ENCODE measurements at regions of chr12 and their contacts with region 1.

Region 1: DNA sequence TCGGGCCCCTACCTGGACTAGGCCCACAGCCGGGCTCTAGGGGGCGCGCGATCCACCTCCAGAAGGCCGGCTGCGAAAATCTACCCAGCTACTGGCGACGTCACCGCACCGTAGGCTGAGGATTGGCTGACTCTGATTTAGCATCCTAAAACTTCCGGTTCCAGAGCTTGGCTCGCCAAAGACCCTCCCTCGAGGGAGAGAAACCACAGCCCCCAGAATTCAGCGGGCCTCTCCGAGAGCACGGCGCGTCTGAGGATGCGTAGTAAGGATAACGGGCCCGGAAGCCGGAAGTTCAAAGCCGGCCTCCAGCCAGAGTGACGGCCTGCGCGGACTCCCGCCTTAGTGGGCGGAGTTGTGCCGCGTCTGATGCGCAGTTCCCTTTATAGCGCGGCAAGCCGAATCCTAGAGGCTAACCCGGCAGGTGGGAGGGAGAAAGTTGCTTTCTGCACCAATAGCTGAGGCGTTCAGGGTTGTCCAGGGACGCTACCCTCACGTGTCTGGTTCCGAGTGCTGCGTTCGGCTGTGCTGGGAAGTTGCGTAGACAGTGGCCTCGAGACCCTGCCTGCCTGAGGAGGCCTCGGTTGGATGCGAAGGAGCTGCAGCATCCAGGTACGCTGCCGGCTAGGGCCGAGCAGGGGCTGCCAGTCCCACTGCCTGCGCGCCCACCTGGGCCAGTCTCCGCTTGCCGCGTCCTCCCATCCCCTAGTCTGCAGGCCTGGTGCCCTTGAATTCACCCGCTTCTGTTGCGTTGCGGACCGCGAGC is at the start of gene COX14:
- DNase-seq: peak; percentile 99
- H3K4me3 Mint-ChIP-seq: peak within 1 kb of the TSS; percentile 89
- H3K27ac Mint-ChIP-seq: peak within 1 kb of the TSS; percentile 97
- H3K4me1 Mint-ChIP-seq: peaks cover 34% of the 10 kb centered on the region
- H3K27me3 Mint-ChIP-seq: no peaks in the 10 kb centered on the region
- total RNA-seq, gene COX14: 31.6 to 47.9 TPM

Region 2: GRCh38 chr12:50066433-50066832 is 45.4 kb before region 1 on chr12:
- CTCF ChIA-PET with region 1: interaction called, 15 read pairs
- POLR2A ChIA-PET with region 1: interaction called, 7 read pairs
- DNase-seq: no peak
- H3K4me3 Mint-ChIP-seq: no peak overlapping the region
- H3K27ac Mint-ChIP-seq: no peak overlapping the region
- H3K4me1 Mint-ChIP-seq: peaks cover 11% of the 10 kb centered on the region
- H3K27me3 Mint-ChIP-seq: peaks cover 2% of the 10 kb centered on the region

Region 3: GRCh38 chr12:50084775-50085614 is 26.9 kb before region 1 on chr12 and contains the start of gene SMARCD1:
- CTCF ChIA-PET with region 1: interaction called, 68 read pairs
- POLR2A ChIA-PET with region 1: interaction called, 3 read pairs
- DNase-seq: peak; percentile 82
- H3K4me3 Mint-ChIP-seq: peak within 1 kb of the TSS; percentile 97
- H3K27ac Mint-ChIP-seq: peak within 1 kb of the TSS; percentile 95
- H3K4me1 Mint-ChIP-seq: peaks cover 35% of the 10 kb centered on the region
- H3K27me3 Mint-ChIP-seq: no peaks in the 10 kb centered on the region
- total RNA-seq, gene SMARCD1: 62.3 to 88.6 TPM

Region 4: GRCh38 chr12:50132505-50133135 is 20.7 kb after region 1 on chr12:
- CTCF ChIA-PET with region 1: interaction called, 63 read pairs
- POLR2A ChIA-PET with region 1: interaction called, 9 read pairs
- DNase-seq: peak; percentile 39
- H3K4me3 Mint-ChIP-seq: no peak overlapping the region
- H3K27ac Mint-ChIP-seq: peak overlapping the region; percentile 16
- H3K4me1 Mint-ChIP-seq: peaks cover 8% of the 10 kb centered on the region
- H3K27me3 Mint-ChIP-seq: no peaks in the 10 kb centered on the region

Region 5: GRCh38 chr12:50167041-50167828 is 55.4 kb after region 1 on chr12 and contains the start of gene CERS5:
- CTCF ChIA-PET with region 1: interaction called, 18 read pairs
- POLR2A ChIA-PET with region 1: no interaction called
- DNase-seq: peak; percentile 98
- H3K4me3 Mint-ChIP-seq: peak within 1 kb of the TSS; percentile 86
- H3K27ac Mint-ChIP-seq: peak within 1 kb of the TSS; percentile 97
- H3K4me1 Mint-ChIP-seq: peaks cover 37% of the 10 kb centered on the region
- H3K27me3 Mint-ChIP-seq: no peaks in the 10 kb centered on the region
- total RNA-seq, gene CERS5: 49.2 to 59.2 TPM

Region 6: DNA sequence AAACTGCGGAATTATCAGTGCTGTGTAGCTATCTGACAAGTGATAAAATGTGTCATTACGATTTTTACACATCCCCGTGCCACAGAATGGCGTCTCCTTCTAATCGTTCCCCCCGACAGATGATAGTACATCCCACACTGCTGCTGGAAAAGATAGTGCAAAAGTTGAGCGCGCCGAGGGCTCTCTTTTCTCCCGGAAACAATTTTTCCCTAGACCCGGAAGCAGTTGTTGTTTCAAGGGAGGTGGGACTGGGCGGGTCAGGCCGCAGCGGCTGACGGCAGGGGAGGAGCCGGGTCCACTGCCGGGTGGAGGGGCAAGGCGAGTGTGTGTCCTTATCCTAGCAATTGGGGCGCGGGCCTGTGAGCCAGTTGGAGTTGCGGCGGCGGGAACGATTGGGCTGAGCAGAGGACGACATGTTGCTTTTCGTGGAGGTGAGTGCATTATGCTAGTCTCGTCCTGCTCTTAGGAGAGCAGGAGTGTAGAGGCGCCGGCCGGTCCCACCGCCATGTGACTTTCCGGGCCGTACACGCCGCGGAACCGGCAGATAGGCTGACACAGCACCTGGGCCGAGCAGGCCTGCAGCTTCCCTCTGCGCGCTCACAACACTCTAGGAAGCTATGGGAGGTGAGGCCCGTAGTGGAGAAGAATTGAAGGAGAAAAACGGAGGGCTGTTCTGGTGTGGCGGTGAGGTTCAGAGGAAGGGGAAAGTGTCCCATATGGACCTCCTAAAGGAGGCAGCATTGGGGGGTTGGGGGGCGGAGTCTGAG is 288.9 kb after region 1 on chr12 and contains the start of gene LARP4:
- CTCF ChIA-PET with region 1: no interaction called
- POLR2A ChIA-PET with region 1: no interaction called
- DNase-seq: peak; percentile 95
- H3K4me3 Mint-ChIP-seq: peak within 1 kb of the TSS; percentile 97
- H3K27ac Mint-ChIP-seq: peak within 1 kb of the TSS; percentile 90
- H3K4me1 Mint-ChIP-seq: peaks cover 25% of the 10 kb centered on the region
- H3K27me3 Mint-ChIP-seq: no peaks in the 10 kb centered on the region
- total RNA-seq, gene LARP4: 46.0 to 52.0 TPM

Measured in activated CD4-positive, alpha-beta T cell treated with anti-CD3 and anti-CD28 coated beads, Interleukin-2, amount 10 ng/mL, durations not matched to agents 7 days and 5 days (primary cell).